Right ventricle myocardium inferior (tissue), 1 donor: ENCODE measurements at regions of chr6 and their contacts with region 1.

Region 1: DNA sequence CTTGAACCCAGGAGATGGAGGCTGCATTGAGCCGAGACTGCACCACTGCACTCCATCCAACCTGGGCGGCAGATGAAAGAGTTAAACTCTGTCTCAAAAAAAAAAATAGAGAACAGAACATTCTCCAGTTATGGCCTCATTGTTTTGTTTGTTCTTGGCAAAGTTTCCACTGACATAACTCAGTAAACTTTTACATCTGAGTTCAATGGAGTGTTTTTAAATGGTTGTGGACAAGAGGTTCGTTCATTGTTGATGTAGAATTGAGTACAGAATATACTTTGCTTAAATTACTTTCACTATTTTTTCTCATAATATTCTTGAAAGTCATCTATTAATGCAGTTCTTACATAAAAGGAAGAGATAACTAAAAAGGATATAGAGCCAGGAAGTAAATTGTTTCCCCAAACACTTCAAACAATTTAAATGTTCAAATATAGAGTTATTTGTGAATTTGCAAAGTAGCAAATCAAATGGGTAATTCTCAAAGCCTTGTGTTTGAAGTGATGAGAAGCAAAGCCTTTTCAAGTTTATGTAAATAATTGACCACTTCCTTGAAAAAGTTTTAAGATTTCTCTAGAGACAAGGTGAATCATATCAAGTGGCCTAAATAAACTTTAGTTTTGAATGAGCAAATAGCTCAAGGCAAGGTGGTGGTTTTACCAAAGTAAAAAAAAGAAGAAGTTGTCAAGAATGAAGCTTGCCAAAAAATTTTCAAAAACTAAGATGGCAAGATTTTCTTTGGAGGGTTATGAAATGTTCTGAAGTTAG is 42.4 kb upstream of the IFNGR1 start:
- DNase-seq: no peak
- ATAC-seq: peak; percentile 45

Region 2: GRCh38 chr6:137218917-137219663 is 42.5 kb before region 1 on chr6 and contains the start of gene IFNGR1:
- intact Hi-C with region 1: loop called (anchors 5 kb)
- DNase-seq: peak; percentile 99
- ATAC-seq: peak; percentile 97
- total RNA-seq, gene IFNGR1: 103 TPM